Activated B cell treated with CpG ODN at 0.5 μM for 24 hours (primary cell): ENCODE measurements at regions of chr15 and their contacts with region 1.

Region 1: DNA sequence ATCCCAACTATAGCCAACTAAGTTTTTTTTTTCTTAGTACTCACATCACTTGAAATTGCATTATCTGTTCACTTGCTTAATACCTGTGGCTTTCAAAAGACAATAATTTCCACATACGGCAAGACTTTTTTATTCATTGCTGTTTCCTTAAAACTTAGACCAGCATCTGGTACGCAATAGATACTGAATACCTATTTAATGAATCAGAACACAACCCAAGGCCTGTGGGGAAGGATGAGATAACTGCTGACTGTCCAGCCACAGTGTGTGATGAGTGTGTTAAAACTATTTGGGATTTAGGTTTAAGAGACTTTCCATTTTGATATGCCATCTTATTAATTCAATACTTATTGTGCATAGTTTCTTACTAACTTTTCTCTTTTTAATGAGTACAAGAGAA is 988.7 kb downstream of the NTRK3 start:
- DNase-seq: no peak
- ATAC-seq: no peak
- H3K4me3 Mint-ChIP-seq: no peak overlapping the region
- H3K27ac Mint-ChIP-seq: no peak overlapping the region
- H3K4me1 Mint-ChIP-seq: no peaks in the 10 kb centered on the region
- H3K27me3 Mint-ChIP-seq: no peaks in the 10 kb centered on the region
- CTCF ChIP-seq: no peak

Region 2: GRCh38 chr15:87227846-87228245 is 40.0 kb before region 1 on chr15:
- CTCF ChIA-PET with region 1: no interaction called
- POLR2A ChIA-PET with region 1: no interaction called
- intact Hi-C with region 1: no loop called
- DNase-seq: no peak
- ATAC-seq: no peak
- H3K4me3 Mint-ChIP-seq: no peak overlapping the region
- H3K27ac Mint-ChIP-seq: no peak overlapping the region
- H3K4me1 Mint-ChIP-seq: no peaks in the 10 kb centered on the region
- H3K27me3 Mint-ChIP-seq: no peaks in the 10 kb centered on the region
- CTCF ChIP-seq: no peak

Region 3: DNA sequence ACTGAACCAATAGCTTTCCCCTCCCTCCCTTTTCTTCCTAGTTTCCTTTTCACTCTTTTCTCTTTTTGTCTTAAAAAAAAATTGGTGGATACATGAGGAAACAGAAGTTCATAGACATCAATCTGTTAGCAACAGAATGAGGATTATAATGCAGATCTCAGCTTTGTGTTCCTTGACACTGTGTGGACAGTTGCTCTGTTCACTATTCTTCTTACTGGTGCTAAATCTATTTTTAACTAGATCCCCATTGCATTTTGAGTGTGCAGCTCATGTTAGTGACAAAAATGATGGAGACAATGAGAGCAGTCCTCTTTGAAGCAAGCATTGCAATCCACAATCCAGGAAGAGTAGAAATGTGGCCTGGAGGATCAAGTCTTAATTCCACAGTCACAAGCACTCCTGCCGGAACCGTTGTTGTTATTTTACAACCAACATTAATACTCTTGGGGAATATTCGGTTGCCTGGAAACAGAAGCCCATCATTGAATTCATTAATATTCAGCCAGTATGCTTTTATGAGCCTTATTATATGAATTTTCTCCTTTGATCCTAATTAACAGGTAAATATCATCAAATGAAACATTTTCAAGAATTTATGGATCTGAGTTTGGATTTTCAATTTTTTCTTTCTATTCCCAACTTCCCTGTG is 28.1 kb before region 1 on chr15:
- CTCF ChIA-PET with region 1: no interaction called
- POLR2A ChIA-PET with region 1: no interaction called
- intact Hi-C with region 1: no loop called
- DNase-seq: no peak
- ATAC-seq: no peak
- H3K4me3 Mint-ChIP-seq: no peak overlapping the region
- H3K27ac Mint-ChIP-seq: no peak overlapping the region
- H3K4me1 Mint-ChIP-seq: no peaks in the 10 kb centered on the region
- H3K27me3 Mint-ChIP-seq: no peaks in the 10 kb centered on the region
- CTCF ChIP-seq: no peak

Region 4: DNA sequence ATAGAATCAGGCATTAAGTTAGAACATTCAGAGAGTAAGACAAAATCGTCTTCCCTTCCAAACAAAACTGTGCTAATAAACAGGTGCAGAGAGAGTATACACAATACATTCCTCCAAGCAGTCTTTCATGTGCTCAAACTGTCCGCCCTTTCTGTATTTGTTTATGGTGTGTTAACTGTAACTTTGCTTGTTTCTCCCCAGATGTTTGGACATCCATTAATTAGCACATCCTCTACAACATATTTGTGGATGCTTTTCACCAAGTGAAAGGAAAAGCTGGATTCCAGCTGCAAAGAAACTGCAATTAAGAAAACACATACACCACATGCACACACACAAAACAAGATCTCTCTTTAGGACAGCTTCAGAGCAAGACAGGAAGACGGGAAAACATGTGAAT is 76.2 kb after region 1 on chr15:
- CTCF ChIA-PET with region 1: no interaction called
- POLR2A ChIA-PET with region 1: no interaction called
- intact Hi-C with region 1: loop called (anchors 5 kb)
- DNase-seq: no peak
- ATAC-seq: no peak
- H3K4me3 Mint-ChIP-seq: no peak overlapping the region
- H3K27ac Mint-ChIP-seq: no peak overlapping the region
- H3K4me1 Mint-ChIP-seq: no peaks in the 10 kb centered on the region
- H3K27me3 Mint-ChIP-seq: no peaks in the 10 kb centered on the region
- CTCF ChIP-seq: no peak

Region 5: DNA sequence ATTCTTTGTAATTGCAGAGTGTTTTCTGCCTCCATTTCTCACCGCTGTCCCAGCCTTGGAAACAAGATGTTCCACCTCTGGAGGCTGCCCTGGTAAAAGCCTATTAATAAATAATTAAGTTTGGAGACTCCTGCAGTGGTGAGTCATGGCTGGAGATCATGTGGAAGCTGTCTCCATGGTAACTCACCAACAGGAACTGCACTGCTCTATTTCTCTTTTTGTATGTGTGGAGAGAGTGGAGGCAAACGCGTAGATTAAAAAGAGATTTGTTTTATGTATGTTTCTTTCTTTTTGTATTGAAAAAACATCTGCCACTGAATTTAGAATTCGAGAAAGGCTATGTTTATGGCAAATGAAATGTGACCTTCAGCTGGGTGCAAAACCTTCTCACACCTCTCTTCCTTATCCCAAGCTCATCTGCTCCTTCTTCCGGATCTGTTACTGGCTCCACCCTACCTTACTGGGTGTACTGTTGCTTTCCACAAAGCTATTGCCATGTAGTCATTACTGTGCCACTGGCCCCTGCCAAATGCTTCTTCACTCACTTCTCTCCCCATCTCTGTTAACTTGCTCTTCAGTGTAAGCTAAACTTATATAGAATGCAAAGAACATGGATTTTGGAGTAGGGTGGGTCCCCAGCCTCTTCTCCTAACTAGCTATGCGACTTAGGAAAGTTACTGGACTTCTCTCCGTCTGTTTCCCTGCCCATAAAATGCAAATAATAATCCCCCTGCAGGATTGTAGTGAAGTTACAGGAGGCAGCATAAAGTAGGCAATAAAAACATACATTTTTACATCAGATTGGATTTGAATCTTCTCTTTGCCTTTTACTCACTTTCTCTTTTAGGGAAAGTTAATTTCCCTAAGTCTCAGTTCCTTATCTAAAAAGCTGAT is 210.2 kb after region 1 on chr15:
- CTCF ChIA-PET with region 1: no interaction called
- POLR2A ChIA-PET with region 1: no interaction called
- intact Hi-C with region 1: no loop called
- DNase-seq: no peak
- ATAC-seq: no peak
- H3K4me3 Mint-ChIP-seq: no peak overlapping the region
- H3K27ac Mint-ChIP-seq: no peak overlapping the region
- H3K4me1 Mint-ChIP-seq: no peaks in the 10 kb centered on the region
- H3K27me3 Mint-ChIP-seq: no peaks in the 10 kb centered on the region
- CTCF ChIP-seq: no peak